GM10248 (cell line): ENCODE measurements at regions of chr12 and their contacts with region 1.

Region 1: DNA sequence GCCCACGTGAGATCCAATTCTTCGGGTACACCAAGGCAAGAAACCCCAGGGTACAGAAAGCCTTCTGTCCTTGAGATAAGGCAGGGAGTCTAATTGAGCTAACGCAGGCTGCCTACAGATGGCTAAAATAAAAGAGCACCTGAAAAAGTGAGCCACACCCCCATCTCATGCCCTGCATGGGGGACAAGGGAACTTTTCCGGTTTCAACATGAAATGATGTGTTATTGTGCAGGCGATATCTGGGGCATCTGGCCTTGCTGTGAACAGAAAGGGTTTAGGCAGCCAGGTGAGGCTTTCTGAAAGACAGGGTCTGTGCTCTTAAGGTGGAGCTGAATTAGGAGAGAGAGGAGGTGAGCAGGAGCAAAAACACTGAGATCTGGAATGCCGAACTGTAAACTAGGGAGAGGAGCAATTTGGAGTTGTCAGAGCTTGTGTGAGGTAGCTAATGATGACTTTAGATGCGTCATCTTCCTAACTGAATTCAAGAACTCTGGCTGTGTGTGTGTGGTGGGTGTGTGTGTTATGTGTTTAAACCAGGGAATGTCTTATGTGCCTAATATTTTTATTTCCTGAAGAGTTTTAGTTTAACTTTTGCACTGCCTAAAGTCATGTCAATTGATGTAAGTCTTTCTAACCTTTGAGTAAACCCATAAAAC is 20.1 kb upstream of the LDHB start:
- DNase-seq: no peak
- CTCF ChIP-seq: no peak

Region 2: GRCh38 chr12:21248679-21249078 is 429.1 kb before region 1 on chr12:
- CTCF ChIA-PET with region 1: interaction called, 17 read pairs
- POLR2A ChIA-PET with region 1: no interaction called
- DNase-seq: no peak
- CTCF ChIP-seq: no peak

Region 3: GRCh38 chr12:21690704-21691368 is 13.1 kb after region 1 on chr12:
- CTCF ChIA-PET with region 1: interaction called, 19 read pairs
- POLR2A ChIA-PET with region 1: no interaction called
- DNase-seq: no peak
- CTCF ChIP-seq: no peak